ENCODE measurements at regions of chr11 and their contacts with region 1.

Region 1: DNA sequence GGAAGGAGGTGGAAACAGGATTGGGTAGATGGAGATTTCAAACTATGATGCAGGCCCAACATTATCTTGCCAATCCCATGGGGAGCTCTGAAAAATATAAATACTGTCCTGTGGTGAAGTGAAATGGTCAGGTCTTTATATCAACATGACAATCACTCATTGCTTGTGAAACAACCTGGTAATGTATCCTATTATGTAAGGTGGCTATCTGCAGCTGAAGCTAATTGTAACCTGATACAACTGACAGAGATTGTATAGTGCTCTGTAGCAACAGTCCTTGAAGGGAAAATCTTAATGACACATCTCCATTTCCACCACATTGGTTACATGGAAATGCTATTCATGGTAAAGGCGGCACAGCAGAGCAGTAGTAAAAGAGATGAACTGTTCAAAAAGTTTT is 20.7 kb upstream of the CHORDC1 start:
- DNase-seq: no peak
- ATAC-seq: peak; percentile 11
- H3K4me3 ChIP-seq: no peak overlapping the region
- H3K27ac ChIP-seq: no peak overlapping the region
- H3K4me1 ChIP-seq: peaks cover 10 to 16% of the 10 kb centered on the region in 2 experiments; a peak in 4 of 5 replicates
- H3K27me3 ChIP-seq: no peaks in the 10 kb centered on the region
- CTCF ChIP-seq: no peak
- EP300 ChIP-seq: no peak
- POLR2A ChIP-seq: no peak
- RAD21 ChIP-seq: no peak

Region 2: DNA sequence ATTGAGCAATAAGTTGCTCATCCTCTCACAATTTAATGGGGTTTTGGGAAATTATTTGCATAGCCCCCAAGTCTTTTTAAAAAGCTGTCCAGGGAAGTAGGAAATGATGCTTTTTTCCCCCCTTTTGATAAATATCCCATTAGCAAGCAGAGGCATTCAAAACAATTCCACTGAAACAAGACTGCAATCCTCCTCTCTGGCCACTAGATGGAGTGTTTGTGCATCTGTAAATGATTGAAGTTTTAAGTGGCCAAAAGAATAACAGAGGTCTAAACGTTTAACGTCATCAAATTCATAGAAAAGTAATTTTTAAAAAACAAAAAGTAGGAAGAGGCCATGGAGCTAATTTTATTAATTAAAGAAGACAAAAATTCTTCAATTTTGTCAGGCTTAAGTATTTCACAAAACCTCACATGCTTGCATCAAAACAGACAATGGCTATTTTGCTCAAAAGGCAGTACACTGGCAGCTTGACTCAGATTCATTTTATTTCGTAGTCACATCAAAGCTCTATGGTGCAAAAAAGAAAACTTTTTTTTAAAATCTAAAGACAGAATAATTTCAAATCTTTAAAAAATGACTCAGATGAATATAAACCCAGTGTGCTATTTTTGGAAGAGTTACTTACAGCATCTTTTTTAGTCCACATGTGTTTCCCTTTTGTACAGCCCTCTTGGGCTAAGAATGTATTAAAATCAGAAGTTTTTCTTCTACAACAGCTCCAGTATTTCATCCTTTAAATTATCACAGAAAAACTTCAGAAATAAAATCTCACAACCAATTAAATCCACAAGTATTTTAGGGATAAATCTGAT is 38.5 kb before region 1 on chr11:
- CTCF ChIA-PET with region 1: no interaction called
- POLR2A ChIA-PET with region 1: no interaction called
- in situ Hi-C with region 1: no loop called
- intact Hi-C with region 1: loop called (anchors 2 kb)
- DNase-seq: peak; percentile 35 to 56 (median 38)
- ATAC-seq: peak; percentile 82
- H3K4me3 ChIP-seq: no peak overlapping the region
- H3K27ac ChIP-seq: no peak overlapping the region
- H3K4me1 ChIP-seq: no peaks in the 10 kb centered on the region
- H3K27me3 ChIP-seq: no peaks in the 10 kb centered on the region
- CTCF ChIP-seq: peak; percentile 62 to 76 (median 63)
- EP300 ChIP-seq: no peak
- POLR2A ChIP-seq: no peak
- RAD21 ChIP-seq: peak; percentile 72 to 73

Region 3: DNA sequence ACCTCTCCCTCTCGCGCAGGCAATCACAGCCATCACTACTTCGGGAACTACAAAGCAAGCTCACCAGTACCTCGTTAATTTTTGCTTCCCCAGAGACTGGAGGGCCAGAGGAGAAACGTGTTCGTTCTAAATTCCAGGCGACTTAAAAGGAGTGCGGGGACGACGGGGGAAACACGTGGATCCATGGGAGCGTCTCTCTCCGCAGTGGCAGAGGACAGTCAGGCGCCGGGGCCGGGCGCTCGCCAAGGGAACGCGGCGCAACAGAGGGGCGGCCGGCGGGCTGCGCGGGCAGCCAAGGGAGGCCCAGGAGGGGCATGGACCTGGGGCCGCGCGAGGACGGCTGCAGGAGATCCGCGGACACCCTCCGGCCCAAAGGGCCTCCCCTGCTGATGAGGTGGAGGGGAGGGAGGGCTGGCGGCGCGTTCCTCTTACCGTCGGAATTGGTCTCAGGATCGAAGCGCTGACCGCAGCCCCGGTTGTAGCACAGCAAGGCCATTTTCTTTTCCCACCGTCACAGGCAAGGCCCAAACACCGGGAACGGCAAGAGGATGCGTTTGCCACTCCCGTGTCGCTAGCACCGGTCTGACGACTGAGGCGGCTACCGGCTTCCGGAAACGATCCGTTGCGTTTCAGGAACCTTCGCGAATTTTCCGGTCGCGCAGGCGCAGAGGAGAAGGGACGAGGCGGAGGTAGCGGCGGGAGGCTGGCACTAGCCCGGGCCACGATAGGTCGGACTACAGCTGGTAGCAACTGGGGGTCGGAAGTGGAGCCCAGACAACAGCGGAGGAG is 20.9 kb before region 1 on chr11 and contains the start of gene CHORDC1:
- CTCF ChIA-PET with region 1: interaction called, 3 read pairs
- POLR2A ChIA-PET with region 1: interaction called, 4 read pairs
- in situ Hi-C with region 1: no loop called
- intact Hi-C with region 1: loop called (anchors 2 kb)
- DNase-seq: peak; percentile 73 to 93 (median 82)
- ATAC-seq: peak; percentile 85
- H3K4me3 ChIP-seq: peak within 1 kb of the TSS; percentile 89
- H3K27ac ChIP-seq: peak within 1 kb of the TSS; percentile 83
- H3K4me1 ChIP-seq: peaks cover 5 to 9% of the 10 kb centered on the region in 2 experiments; a peak in 4 of 5 replicates
- H3K27me3 ChIP-seq: no peaks in the 10 kb centered on the region
- CTCF ChIP-seq: no peak
- EP300 ChIP-seq: no peak
- POLR2A ChIP-seq: peak; percentile 91
- RAD21 ChIP-seq: no peak
- polyA plus RNA-seq, gene CHORDC1: 112 to 148 TPM

Region 4: DNA sequence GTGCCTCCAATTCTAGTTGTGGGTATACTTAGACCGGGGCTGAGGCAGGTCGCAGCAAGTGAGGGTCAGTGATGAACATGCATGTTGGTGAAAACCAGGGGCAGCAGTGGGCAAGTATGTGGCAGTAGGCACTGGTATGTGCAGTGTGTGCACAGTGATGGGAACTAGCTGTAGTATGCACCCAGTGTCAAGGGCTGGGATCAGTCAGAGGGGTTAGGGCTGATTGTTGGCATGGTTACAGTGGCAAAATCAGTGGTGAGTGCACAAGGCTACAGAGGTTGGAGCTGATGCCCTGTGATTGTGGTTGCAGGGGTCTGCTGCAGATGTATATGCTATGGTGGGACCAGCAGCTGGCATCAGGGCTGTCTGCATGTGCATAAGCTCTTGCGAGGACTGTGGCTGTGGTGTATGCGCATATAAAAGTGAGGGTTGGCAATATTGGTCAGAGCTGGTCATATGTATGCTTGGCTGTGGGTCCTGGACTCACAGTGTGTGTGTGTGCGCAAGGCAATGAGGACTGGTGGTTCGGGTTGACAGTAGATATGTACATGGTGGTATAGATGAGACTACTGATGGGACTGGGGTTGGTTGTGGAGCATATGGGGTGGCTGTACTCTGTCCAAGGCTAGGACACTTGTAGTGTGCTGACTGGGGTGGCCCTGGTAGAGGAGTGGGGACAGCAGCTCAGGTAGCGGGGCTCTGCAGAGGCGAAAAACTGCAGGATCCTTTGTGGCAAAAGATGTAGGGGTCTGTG is 13.0 kb after region 1 on chr11:
- CTCF ChIA-PET with region 1: no interaction called
- POLR2A ChIA-PET with region 1: no interaction called
- in situ Hi-C with region 1: no loop called
- intact Hi-C with region 1: no loop called
- DNase-seq: no peak
- ATAC-seq: peak; percentile 57
- H3K4me3 ChIP-seq: no peak overlapping the region
- H3K27ac ChIP-seq: no peak overlapping the region
- H3K4me1 ChIP-seq: no peaks in the 10 kb centered on the region
- H3K27me3 ChIP-seq: peaks cover 0 to 13% of the 10 kb centered on the region in 2 experiments; a peak in 2 of 5 replicates
- CTCF ChIP-seq: no peak
- EP300 ChIP-seq: no peak
- POLR2A ChIP-seq: no peak
- RAD21 ChIP-seq: no peak

Region 5: DNA sequence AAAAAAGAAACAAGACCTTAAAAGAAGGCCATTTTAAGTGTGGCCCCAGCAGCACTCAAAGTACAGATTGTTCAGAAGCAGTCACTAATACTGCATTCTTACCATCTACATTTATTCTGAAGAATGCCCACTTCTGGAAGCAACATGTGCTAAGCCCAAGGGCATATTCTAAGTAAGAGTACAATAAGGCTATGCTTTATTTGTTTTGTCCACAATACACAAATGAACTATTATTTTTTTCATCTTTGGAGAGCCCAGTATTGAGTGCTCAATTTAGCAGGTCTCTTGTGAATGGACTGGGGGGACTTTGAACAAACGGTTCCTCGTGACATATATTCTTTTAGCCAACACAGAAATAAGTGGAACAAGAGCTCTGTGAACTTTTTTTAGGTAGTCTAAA is 170.7 kb after region 1 on chr11:
- CTCF ChIA-PET with region 1: no interaction called
- POLR2A ChIA-PET with region 1: no interaction called
- in situ Hi-C with region 1: no loop called
- intact Hi-C with region 1: no loop called
- DNase-seq: no peak
- ATAC-seq: no peak
- H3K4me3 ChIP-seq: no peak overlapping the region
- H3K27ac ChIP-seq: no peak overlapping the region
- H3K4me1 ChIP-seq: no peaks in the 10 kb centered on the region
- H3K27me3 ChIP-seq: no peaks in the 10 kb centered on the region
- CTCF ChIP-seq: no peak
- EP300 ChIP-seq: no peak
- POLR2A ChIP-seq: no peak
- RAD21 ChIP-seq: no peak

Measured in K562 (cell line).